SK-N-SH (cell line): ENCODE measurements at regions of chr11 and their contacts with region 1.

Region 1: GRCh38 chr11:6377902-6378639 is 12.2 kb upstream of the SMPD1 start:
- DNase-seq: no peak
- H3K4me3 ChIP-seq: no peak overlapping the region
- H3K27ac ChIP-seq: no peak overlapping the region
- H3K4me1 ChIP-seq: no peaks in the 10 kb centered on the region; a peak in 1 of 4 replicates
- H3K27me3 ChIP-seq: no peaks in the 10 kb centered on the region; the same call in 1 of the 2 replicates
- CTCF ChIP-seq: no peak
- EP300 ChIP-seq: no peak
- RAD21 ChIP-seq: no peak

Region 2: GRCh38 chr11:6353367-6353987 is 24.6 kb before region 1 on chr11:
- CTCF ChIA-PET with region 1: interaction called, 38 read pairs
- POLR2A ChIA-PET with region 1: no interaction called
- DNase-seq: peak; percentile 62
- H3K4me3 ChIP-seq: peak overlapping the region in 1 of 2 experiments; percentile 14; a peak in 1 of 4 replicates
- H3K27ac ChIP-seq: no peak overlapping the region
- H3K4me1 ChIP-seq: peaks cover 0 to 5% of the 10 kb centered on the region in 2 experiments; a peak in 1 of 4 replicates
- H3K27me3 ChIP-seq: peaks cover 20% of the 10 kb centered on the region; the same call in 1 of the 2 replicates
- CTCF ChIP-seq: peak; percentile 98
- EP300 ChIP-seq: no peak
- RAD21 ChIP-seq: peak; percentile 89

Region 3: GRCh38 chr11:6402561-6402981 is 24.5 kb after region 1 on chr11:
- CTCF ChIA-PET with region 1: interaction called, 19 read pairs
- POLR2A ChIA-PET with region 1: no interaction called
- DNase-seq: no peak
- H3K4me3 ChIP-seq: no peak overlapping the region
- H3K27ac ChIP-seq: no peak overlapping the region
- H3K4me1 ChIP-seq: peaks cover 7 to 13% of the 10 kb centered on the region in 2 experiments; a peak in 2 of 4 replicates
- H3K27me3 ChIP-seq: no peaks in the 10 kb centered on the region
- CTCF ChIP-seq: no peak
- EP300 ChIP-seq: no peak
- RAD21 ChIP-seq: no peak

Region 4: GRCh38 chr11:6431861-6432260 is 53.8 kb after region 1 on chr11:
- CTCF ChIA-PET with region 1: interaction called, 360 read pairs
- POLR2A ChIA-PET with region 1: no interaction called
- DNase-seq: no peak
- H3K4me3 ChIP-seq: no peak overlapping the region
- H3K27ac ChIP-seq: no peak overlapping the region
- H3K4me1 ChIP-seq: no peaks in the 10 kb centered on the region
- H3K27me3 ChIP-seq: no peaks in the 10 kb centered on the region
- CTCF ChIP-seq: no peak
- EP300 ChIP-seq: peak in 1 of 2 experiments; percentile 40; a peak in 1 of 4 replicates
- RAD21 ChIP-seq: no peak

Region 5: GRCh38 chr11:6505577-6506240 is 127.6 kb after region 1 on chr11:
- CTCF ChIA-PET with region 1: interaction called, 67 read pairs
- POLR2A ChIA-PET with region 1: no interaction called
- DNase-seq: peak; percentile 62
- H3K4me3 ChIP-seq: no peak overlapping the region
- H3K27ac ChIP-seq: peak overlapping the region in 1 of 2 experiments; percentile 24; a peak in 1 of 4 replicates
- H3K4me1 ChIP-seq: 0 out of 4 replicates have a peak, but pooled peaks cover 0 to 4% of the 10 kb centered on the region in 2 experiments
- H3K27me3 ChIP-seq: no peaks in the 10 kb centered on the region
- CTCF ChIP-seq: peak; percentile 76
- EP300 ChIP-seq: no peak
- RAD21 ChIP-seq: peak; percentile 67

Region 6: DNA sequence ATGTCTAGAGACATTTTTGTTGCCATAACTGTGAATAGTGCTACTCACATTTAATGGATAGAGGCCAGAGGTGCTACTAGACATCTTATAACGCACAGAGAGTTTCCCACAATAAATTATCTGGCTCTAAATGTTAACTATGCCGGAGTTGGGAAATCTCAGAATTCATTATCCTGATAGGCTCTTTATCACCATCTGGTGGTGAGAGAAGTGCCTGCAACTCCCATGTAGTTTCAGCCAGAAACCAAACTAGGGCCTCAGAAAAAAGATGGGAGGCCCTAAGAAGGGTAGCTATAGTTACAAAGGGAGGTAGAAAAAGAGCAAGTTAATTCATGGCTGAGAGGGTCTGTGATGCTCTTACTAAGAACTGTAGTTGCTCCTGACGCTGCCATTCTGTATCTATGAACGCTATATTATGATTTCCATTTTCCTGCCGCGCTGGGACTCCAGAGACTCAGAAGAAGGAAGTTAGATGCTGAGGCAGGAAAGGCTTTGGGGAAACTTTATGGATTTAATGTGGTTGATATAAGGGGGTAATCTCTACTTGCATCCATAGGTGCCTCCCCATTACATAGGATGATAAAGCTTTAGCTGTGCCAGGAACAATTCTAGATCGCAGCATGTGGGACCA is 327.9 kb after region 1 on chr11:
- CTCF ChIA-PET with region 1: interaction called, 52 read pairs
- POLR2A ChIA-PET with region 1: no interaction called
- DNase-seq: peak; percentile 47
- H3K4me3 ChIP-seq: no peak overlapping the region; a peak in 1 of 4 replicates
- H3K27ac ChIP-seq: no peak overlapping the region
- H3K4me1 ChIP-seq: 0 out of 4 replicates have a peak, but pooled peaks cover 0 to 2% of the 10 kb centered on the region in 2 experiments
- H3K27me3 ChIP-seq: no peaks in the 10 kb centered on the region; the same call in 1 of the 2 replicates
- CTCF ChIP-seq: peak; percentile 93
- EP300 ChIP-seq: no peak
- RAD21 ChIP-seq: peak; percentile 79